Activated CD8-positive, alpha-beta T cell treated with anti-CD3 and anti-CD28 coated beads for 36 hours (primary cell): ENCODE measurements at regions of chr4 and their contacts with region 1.

Region 1: GRCh38 chr4:145180298-145181090 is at the start of gene OTUD4:
- DNase-seq: peak; percentile 96
- ATAC-seq: peak; percentile 84
- H3K4me3 Mint-ChIP-seq: peak within 1 kb of the TSS; percentile 89
- H3K27ac Mint-ChIP-seq: peak within 1 kb of the TSS; percentile 97
- H3K4me1 Mint-ChIP-seq: peaks cover 20% of the 10 kb centered on the region
- H3K27me3 Mint-ChIP-seq: no peaks in the 10 kb centered on the region
- CTCF ChIP-seq: no peak
- total RNA-seq, gene OTUD4: 41.4 to 49.6 TPM

Region 2: GRCh38 chr4:145097821-145098674 is 82.4 kb before region 1 on chr4 and contains the starts of genes ABCE1 and ANAPC10:
- CTCF ChIA-PET with region 1: interaction called, 3 read pairs
- POLR2A ChIA-PET with region 1: interaction called, 49 read pairs
- intact Hi-C with region 1: loop called (anchors 5 kb)
- DNase-seq: peak; percentile 99
- ATAC-seq: peak; percentile 92
- H3K4me3 Mint-ChIP-seq: peak within 1 kb of the TSS; percentile 97
- H3K27ac Mint-ChIP-seq: peak within 1 kb of the TSS; percentile 99
- H3K4me1 Mint-ChIP-seq: peaks cover 21% of the 10 kb centered on the region
- H3K27me3 Mint-ChIP-seq: no peaks in the 10 kb centered on the region
- CTCF ChIP-seq: no peak
- total RNA-seq, gene ABCE1: 164 to 186 TPM
- total RNA-seq, gene ANAPC10: 24.9 to 26.8 TPM

Region 3: GRCh38 chr4:145248971-145249370 is 68.5 kb after region 1 on chr4:
- CTCF ChIA-PET with region 1: no interaction called
- POLR2A ChIA-PET with region 1: no interaction called
- intact Hi-C with region 1: no loop called
- DNase-seq: no peak
- ATAC-seq: no peak
- H3K4me3 Mint-ChIP-seq: no peak overlapping the region
- H3K27ac Mint-ChIP-seq: no peak overlapping the region
- H3K4me1 Mint-ChIP-seq: no peaks in the 10 kb centered on the region
- H3K27me3 Mint-ChIP-seq: peaks cover 21% of the 10 kb centered on the region
- CTCF ChIP-seq: no peak

Region 4: GRCh38 chr4:145481164-145481941 is 300.9 kb after region 1 on chr4 and contains the start of gene SMAD1:
- CTCF ChIA-PET with region 1: no interaction called
- POLR2A ChIA-PET with region 1: no interaction called
- intact Hi-C with region 1: loop called (anchors 10 kb)
- DNase-seq: peak; percentile 41
- ATAC-seq: peak; percentile 43
- H3K4me3 Mint-ChIP-seq: peak within 1 kb of the TSS; percentile 69
- H3K27ac Mint-ChIP-seq: no peak within 1 kb of the TSS
- H3K4me1 Mint-ChIP-seq: peaks cover 5% of the 10 kb centered on the region
- H3K27me3 Mint-ChIP-seq: peaks cover 36% of the 10 kb centered on the region
- CTCF ChIP-seq: no peak
- total RNA-seq, gene SMAD1: 0.67 to 0.92 TPM